ENCODE measurements at regions of chr4 and their contacts with region 1.

Region 1: GRCh38 chr4:15771216-15772058 is 6.7 kb upstream of the CD38 start:
- DNase-seq: no peak
- ATAC-seq: peak; percentile 82
- H3K4me3 Mint-ChIP-seq: peak overlapping the region; percentile 54
- H3K27ac Mint-ChIP-seq: peak overlapping the region; percentile 82
- H3K4me1 Mint-ChIP-seq: peaks cover 64% of the 10 kb centered on the region
- H3K27me3 Mint-ChIP-seq: no peaks in the 10 kb centered on the region

Region 2: DNA sequence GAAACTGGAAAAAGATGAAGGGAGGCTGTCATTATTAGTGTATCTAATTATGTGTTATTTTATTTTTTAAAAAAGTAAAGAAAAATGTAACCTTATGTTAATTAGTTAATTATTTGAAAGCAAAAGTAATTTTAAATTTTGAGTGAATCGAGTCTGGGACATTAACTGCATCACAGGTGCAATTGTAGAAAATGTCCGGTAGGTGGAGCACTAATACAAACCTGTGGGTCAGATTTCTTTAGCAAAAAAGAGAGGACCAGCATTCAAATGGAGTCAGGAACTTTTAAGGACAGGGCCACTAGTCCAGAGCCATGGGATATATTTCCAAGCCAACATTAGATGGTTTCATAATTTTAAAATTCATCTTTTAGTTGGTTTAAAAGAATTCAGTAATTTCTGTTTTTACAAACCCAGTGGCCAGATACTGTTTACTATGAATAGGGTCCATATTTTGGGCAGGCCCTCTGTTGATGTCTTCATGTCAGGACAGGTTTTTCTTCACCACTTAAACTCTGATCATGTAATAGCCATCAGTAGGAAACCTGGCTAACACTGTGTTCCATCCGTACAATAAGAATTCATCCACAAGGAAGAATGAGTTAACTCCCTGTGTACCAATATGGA is 41.4 kb before region 1 on chr4:
- POLR2A ChIA-PET with region 1: no interaction called
- DNase-seq: no peak
- ATAC-seq: peak; percentile 56
- H3K4me3 Mint-ChIP-seq: no peak overlapping the region
- H3K27ac Mint-ChIP-seq: no peak overlapping the region
- H3K4me1 Mint-ChIP-seq: peaks cover 11% of the 10 kb centered on the region
- H3K27me3 Mint-ChIP-seq: peaks cover 8% of the 10 kb centered on the region

Region 3: DNA sequence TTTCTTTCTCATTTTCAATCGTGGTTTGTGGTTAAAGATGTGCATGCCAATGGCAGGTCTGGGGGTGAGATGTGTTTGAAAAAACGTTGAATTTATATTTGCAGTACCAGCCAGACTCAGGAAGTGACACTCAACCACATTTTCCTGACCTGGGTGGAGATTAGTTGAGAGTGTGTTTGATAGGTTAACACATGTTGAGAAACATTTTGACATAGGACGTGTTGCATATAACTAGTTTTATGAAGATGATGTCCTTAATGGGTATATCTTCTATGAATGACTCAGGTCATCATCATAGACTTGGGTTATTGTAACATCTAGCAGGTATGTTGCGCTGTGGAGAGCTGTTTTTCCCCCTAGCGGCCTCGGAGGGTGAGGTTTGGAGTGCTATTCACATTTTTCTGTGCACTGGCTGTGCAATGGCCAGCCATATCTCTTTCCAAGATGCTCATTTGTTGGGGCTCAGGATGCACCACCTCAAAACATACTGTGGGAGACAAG is 15.0 kb before region 1 on chr4:
- POLR2A ChIA-PET with region 1: interaction called, 52 read pairs
- DNase-seq: peak; percentile 67
- ATAC-seq: peak; percentile 78
- H3K4me3 Mint-ChIP-seq: peak overlapping the region; percentile 80
- H3K27ac Mint-ChIP-seq: peak overlapping the region; percentile 87
- H3K4me1 Mint-ChIP-seq: peaks cover 45% of the 10 kb centered on the region
- H3K27me3 Mint-ChIP-seq: no peaks in the 10 kb centered on the region